Right ventricle myocardium superior (tissue), 1 donor: ENCODE measurements at regions of chr14 and their contacts with region 1.

Region 1: DNA sequence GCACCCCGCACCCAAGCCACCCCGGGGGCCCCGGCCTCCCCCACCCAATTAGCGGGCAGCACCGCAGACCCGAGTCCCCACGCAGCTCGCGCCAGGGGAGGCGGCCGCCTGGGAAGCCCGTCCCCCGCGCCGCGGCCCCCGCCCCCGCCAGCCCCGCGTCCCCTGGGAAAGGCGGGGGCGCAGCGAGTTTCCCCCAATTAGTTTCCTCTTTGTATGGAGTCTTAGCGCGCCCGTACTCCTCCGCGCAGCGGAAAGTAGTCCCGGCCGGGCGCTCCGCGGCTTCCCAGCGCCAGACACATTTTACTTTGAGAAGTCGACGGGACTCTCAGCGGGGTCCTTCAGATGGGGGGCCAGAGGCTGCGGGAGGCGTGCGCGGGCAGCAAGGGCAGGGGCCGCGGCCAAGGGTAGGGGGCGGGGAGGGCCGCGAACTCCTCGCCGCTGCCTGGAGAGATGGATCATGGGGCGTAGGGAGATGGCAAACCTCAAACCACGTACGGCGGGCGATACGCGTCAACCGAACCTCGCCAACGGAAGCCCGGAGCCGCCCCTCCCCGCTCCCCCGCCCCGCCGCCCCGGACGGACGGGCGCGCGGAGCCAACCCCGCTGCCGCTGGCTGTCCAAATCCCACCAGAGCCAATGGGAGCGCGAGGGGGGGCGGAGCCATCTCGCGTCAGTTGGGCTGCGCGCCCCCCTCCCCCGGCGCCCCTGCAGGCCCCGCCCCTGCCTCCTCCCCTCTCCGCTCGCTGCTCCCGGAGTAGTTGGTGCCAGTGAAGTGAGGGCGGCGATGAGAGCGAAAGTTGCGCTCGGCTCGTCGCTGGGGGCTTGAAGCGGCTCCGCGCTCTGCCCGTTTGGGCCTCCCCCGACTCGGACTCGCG is at the start of gene RCOR1:
- DNase-seq: peak; percentile 99
- ATAC-seq: peak; percentile 95
- total RNA-seq, gene RCOR1: 10.8 TPM

Region 2: GRCh38 chr14:102524466-102525218 is 67.5 kb before region 1 on chr14:
- intact Hi-C with region 1: loop called (anchors 2 kb)
- DNase-seq: peak; percentile 99
- ATAC-seq: peak; percentile 98

Region 3: GRCh38 chr14:102633906-102634595 is 41.9 kb after region 1 on chr14:
- intact Hi-C with region 1: no loop called
- DNase-seq: no peak
- ATAC-seq: no peak

Region 4: GRCh38 chr14:102786768-102787167 is 194.6 kb after region 1 on chr14:
- intact Hi-C with region 1: no loop called
- DNase-seq: no peak
- ATAC-seq: no peak